ENCODE measurements at regions of chr17 and their contacts with region 1.

Region 1: GRCh38 chr17:74379495-74380085 is 12.3 kb downstream of the GPR142 start:
- DNase-seq: peak; percentile 88
- H3K4me3 ChIP-seq: no peak overlapping the region
- H3K27ac ChIP-seq: no peak overlapping the region
- H3K4me1 ChIP-seq: peaks cover 7% of the 10 kb centered on the region
- CTCF ChIP-seq: peak; percentile 99

Region 2: GRCh38 chr17:74325743-74326379 is 53.7 kb before region 1 on chr17 and contains the start of gene KIF19:
- CTCF ChIA-PET with region 1: no interaction called
- POLR2A ChIA-PET with region 1: no interaction called
- intact Hi-C with region 1: no loop called
- DNase-seq: no peak
- H3K4me3 ChIP-seq: no peak within 1 kb of the TSS
- H3K27ac ChIP-seq: no peak within 1 kb of the TSS
- H3K4me1 ChIP-seq: no peaks in the 10 kb centered on the region
- CTCF ChIP-seq: no peak
- total RNA-seq, gene KIF19: not detected in 2 replicates

Region 3: DNA sequence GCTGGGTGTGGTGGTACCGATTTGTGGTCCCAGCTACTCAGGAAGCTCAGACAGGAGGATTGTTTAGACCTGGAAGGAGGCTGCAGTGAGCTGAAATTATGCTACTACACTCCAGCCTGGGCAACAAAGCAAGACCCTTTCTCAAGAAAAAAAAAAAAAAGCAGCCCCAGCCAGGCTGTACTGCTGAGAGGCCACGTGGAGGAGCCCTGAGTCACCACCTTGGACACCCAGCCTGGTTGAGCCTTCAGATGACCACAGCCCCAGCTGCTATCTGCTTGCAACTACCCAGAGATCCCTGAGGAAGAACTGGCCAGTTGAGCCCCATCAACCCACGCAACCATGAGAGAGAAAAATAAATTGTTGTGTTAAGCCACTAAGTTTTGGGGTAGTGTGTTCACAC is 28.7 kb after region 1 on chr17:
- CTCF ChIA-PET with region 1: no interaction called
- POLR2A ChIA-PET with region 1: no interaction called
- intact Hi-C with region 1: no loop called
- DNase-seq: peak; percentile 19
- H3K4me3 ChIP-seq: no peak overlapping the region
- H3K27ac ChIP-seq: no peak overlapping the region
- H3K4me1 ChIP-seq: peaks cover 13% of the 10 kb centered on the region
- CTCF ChIP-seq: peak; percentile 40

Region 4: GRCh38 chr17:74601944-74602572 is 222.5 kb after region 1 on chr17:
- CTCF ChIA-PET with region 1: interaction called, 5 read pairs
- POLR2A ChIA-PET with region 1: no interaction called
- intact Hi-C with region 1: loop called (anchors 1 kb)
- DNase-seq: peak; percentile 54
- H3K4me3 ChIP-seq: no peak overlapping the region
- H3K27ac ChIP-seq: no peak overlapping the region
- H3K4me1 ChIP-seq: peaks cover 21% of the 10 kb centered on the region
- CTCF ChIP-seq: peak; percentile 84

Measured in OCI-LY7 (cell line).